AG04450 (cell line): ENCODE measurements at regions of chr17 and their contacts with region 1.

Region 1: DNA sequence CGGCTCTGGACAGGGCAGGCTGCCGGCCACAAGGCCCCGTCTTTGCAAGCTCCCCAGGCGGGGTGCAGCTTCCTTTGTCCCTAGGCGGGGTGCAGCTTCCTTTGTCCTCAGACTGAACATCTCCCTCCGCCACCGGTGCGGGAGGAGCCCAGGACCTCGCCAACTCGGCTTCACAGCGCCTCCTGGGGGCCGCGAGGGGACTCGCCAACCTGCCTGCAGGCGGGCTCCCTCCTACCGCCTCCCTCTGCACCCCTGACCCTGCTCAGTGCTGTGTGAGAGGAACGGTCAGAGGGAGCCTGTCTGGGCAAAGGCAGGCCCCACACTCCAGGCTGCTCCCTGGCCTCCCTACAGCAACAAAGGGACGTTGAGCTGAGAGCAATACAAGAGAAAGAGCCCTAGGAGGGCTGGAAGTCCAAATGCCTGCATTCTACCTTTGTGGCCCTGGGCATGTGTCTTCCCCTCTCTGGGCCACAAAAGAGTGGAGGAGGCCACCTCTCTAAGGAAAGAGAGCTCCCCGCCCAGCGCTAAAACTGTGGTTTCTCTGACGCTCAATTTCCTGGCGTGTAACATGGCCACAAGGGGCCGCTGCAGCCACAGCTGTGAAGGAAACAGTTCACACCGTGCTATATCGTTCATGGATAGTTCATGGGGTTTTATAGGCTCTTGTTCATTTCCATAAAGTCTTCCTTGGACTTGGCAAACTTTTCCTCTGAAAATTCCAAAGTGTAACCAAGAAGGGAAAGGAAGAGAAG is 20.9 kb upstream of the KRT19 start:
- DNase-seq: peak; percentile 77
- H3K4me3 ChIP-seq: no peak overlapping the region
- H3K27ac ChIP-seq: peak overlapping the region; percentile 85
- H3K27me3 ChIP-seq: no peaks in the 10 kb centered on the region
- CTCF ChIP-seq: peak; percentile 86

Region 2: DNA sequence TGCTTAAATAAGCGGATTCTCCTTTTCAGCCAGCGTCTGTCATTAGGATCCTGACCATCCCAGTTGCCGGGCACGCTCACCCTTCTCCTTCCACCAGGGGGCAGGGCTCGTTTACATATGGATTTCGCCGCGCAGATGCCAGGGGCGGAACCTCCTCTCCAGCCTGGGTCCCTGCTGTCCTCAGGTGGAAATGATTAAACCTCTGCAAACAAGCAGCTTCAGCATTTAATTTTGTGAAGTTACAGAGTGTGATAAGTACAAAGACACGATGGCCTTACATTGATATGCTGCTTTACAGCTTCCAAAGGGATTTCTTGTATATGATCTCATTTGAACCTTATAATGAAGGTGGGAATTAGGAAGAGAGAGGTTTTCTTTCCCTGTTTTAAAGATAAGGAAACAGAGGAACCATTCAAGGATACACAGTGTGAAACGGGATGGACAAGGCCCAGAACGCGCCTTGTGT is 745.4 kb before region 1 on chr17:
- CTCF ChIA-PET with region 1: interaction called, 23 read pairs
- POLR2A ChIA-PET with region 1: no interaction called
- DNase-seq: peak; percentile 16
- H3K4me3 ChIP-seq: no peak overlapping the region
- H3K27ac ChIP-seq: no peak overlapping the region
- H3K27me3 ChIP-seq: peaks cover 33% of the 10 kb centered on the region
- CTCF ChIP-seq: peak; percentile 95

Region 3: DNA sequence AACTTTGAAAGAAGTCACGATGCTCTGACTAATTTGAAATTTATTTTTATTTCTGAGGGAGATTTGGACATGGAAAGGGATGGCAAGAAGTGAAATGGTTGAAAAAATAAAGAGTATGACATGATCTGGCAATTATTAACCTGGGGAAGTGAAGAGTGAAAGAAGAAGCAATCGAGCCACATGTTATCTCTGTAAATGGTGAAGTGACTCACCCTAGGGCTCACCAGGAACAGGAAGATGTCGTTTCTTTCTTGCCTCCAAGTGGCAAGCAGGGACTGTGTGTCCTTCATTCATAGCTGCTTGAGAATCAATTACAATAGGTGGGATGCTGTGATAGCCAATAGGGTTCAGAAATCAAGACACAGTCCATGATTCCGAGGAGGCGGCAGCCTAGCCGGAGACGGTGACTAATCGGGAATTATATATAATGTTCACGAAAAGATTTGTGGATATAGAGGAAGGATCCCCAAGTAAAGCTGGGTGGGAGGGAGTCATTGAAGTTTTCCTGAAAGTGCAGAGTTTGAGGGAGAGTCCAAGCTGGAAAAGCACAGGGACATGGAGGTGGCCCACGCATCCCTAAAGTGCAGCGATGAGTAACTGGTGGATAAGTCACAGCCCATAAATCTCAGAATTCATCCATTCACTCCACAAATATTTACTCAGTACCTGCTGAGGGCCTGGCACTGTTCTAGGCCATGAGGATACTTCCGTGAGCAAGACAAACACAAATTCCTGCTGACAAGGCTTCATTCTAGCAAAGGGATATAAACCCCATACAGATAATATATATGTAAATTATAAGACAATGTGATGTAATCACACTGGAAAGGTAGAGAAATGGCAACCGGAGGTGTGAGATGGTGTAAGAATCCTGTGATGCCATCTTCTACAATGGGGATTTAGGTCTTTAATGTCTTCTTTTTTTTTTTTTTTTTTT is 645.6 kb before region 1 on chr17:
- CTCF ChIA-PET with region 1: interaction called, 93 read pairs
- POLR2A ChIA-PET with region 1: no interaction called
- DNase-seq: no peak
- H3K4me3 ChIP-seq: peak overlapping the region; percentile 21; the same call in 1 of the 2 replicates
- H3K27ac ChIP-seq: peak overlapping the region; percentile 83
- H3K27me3 ChIP-seq: no peaks in the 10 kb centered on the region
- CTCF ChIP-seq: no peak

Region 4: GRCh38 chr17:41322094-41322902 is 226.7 kb before region 1 on chr17:
- CTCF ChIA-PET with region 1: interaction called, 26 read pairs
- POLR2A ChIA-PET with region 1: no interaction called
- DNase-seq: peak; percentile 42
- H3K4me3 ChIP-seq: no peak overlapping the region
- H3K27ac ChIP-seq: no peak overlapping the region
- H3K27me3 ChIP-seq: no peaks in the 10 kb centered on the region
- CTCF ChIP-seq: peak; percentile 96

Region 5: GRCh38 chr17:41504246-41504977 is 44.6 kb before region 1 on chr17:
- CTCF ChIA-PET with region 1: interaction called, 12 read pairs
- POLR2A ChIA-PET with region 1: no interaction called
- DNase-seq: no peak
- H3K4me3 ChIP-seq: no peak overlapping the region
- H3K27ac ChIP-seq: no peak overlapping the region
- H3K27me3 ChIP-seq: peaks cover 2% of the 10 kb centered on the region
- CTCF ChIP-seq: no peak

Region 6: GRCh38 chr17:41538565-41538991 is 10.4 kb before region 1 on chr17:
- CTCF ChIA-PET with region 1: interaction called, 60 read pairs
- POLR2A ChIA-PET with region 1: interaction called, 4 read pairs
- DNase-seq: no peak
- H3K4me3 ChIP-seq: no peak overlapping the region
- H3K27ac ChIP-seq: peak overlapping the region; percentile 61
- H3K27me3 ChIP-seq: no peaks in the 10 kb centered on the region
- CTCF ChIP-seq: no peak

Region 7: GRCh38 chr17:41602524-41602923 is 53.5 kb after region 1 on chr17:
- CTCF ChIA-PET with region 1: interaction called, 11 read pairs
- POLR2A ChIA-PET with region 1: no interaction called
- DNase-seq: no peak
- H3K4me3 ChIP-seq: no peak overlapping the region
- H3K27ac ChIP-seq: no peak overlapping the region
- H3K27me3 ChIP-seq: peaks cover 9% of the 10 kb centered on the region
- CTCF ChIP-seq: no peak